Naive thymus-derived CD4-positive, alpha-beta T cell (primary cell): ENCODE measurements at regions of chr4 and their contacts with region 1.

Region 1: DNA sequence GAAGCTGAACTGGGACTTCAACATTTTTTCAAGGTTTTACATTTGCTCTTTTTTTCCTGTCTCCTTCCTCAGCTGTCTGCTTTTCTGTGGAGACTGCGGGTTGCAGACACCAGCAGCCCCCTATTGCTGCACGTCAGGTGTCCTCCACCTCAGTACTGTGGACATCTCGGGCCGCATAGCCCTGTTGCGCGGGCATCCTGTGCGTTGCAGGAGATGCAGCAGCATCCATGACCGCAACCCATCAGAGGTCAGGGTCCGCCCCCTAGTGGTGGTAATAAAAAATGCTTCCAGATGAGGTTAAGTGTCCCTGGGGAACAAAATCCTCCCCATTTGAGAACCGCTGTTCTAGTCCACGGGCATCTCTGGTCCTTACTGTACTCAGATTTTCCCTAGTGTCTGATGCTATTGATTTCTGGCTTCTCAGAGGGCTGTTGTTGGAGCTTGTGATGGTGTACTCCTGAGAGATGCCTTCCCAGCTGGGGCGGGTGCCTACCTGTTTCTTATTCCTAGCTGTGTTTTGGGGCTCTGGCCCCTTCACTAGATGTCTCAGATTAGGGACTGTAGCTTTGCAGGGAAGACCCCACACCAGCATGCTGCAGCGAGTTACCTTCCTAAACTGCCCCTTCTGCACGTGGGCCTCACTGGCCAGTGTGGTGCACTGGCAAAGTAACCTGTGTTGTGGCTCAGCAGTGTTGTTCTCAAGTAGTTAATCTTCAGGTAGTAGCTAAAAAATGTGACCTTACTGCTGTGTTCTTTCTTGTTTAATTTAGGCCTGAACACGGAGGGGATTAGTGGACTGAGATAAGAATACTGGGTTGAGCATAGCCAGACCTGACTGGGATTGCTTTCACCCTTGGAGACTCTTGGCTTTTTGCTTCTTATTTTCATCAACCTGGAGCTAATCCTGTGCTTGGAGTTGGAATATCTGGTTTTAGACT is 28.2 kb downstream of the NSD2 start:
- DNase-seq: peak; percentile 55 to 82 (median 76)
- ATAC-seq: peak; percentile 97
- H3K4me3 ChIP-seq: no peak overlapping the region
- H3K4me3 Mint-ChIP-seq: peak overlapping the region in 4 of 10 donors; percentile 18 to 64 (median 42)
- H3K27ac ChIP-seq: no peak overlapping the region
- H3K27ac Mint-ChIP-seq: peak overlapping the region in 4 of 9 donors; percentile 2 to 87 (median 17)
- H3K4me1 ChIP-seq: no peaks in the 10 kb centered on the region
- H3K4me1 Mint-ChIP-seq: peaks cover 7 to 66% (median 11%) of the 10 kb centered on the region in 7 donors
- H3K27me3 ChIP-seq: no peaks in the 10 kb centered on the region
- H3K27me3 Mint-ChIP-seq: no peaks in the 10 kb centered on the region

Region 2: GRCh38 chr4:1693129-1693896 is 206.1 kb before region 1 on chr4:
- CTCF ChIA-PET with region 1: interaction called, 8 read pairs
- POLR2A ChIA-PET with region 1: no interaction called
- intact Hi-C with region 1: loop called in 1 of 2 experiments (anchors 1 kb)
- DNase-seq: peak; percentile 65 to 83 (median 80)
- ATAC-seq: peak; percentile 97
- H3K4me3 ChIP-seq: no peak overlapping the region
- H3K4me3 Mint-ChIP-seq: no peak overlapping the region
- H3K27ac ChIP-seq: no peak overlapping the region
- H3K27ac Mint-ChIP-seq: peak overlapping the region in 8 of 9 donors; percentile 51 to 88 (median 72)
- H3K4me1 ChIP-seq: no peaks in the 10 kb centered on the region
- H3K4me1 Mint-ChIP-seq: peaks cover 0 to 5% (median 4%) of the 10 kb centered on the region in 7 donors
- H3K27me3 ChIP-seq: no peaks in the 10 kb centered on the region
- H3K27me3 Mint-ChIP-seq: no peaks in the 10 kb centered on the region

Region 3: DNA sequence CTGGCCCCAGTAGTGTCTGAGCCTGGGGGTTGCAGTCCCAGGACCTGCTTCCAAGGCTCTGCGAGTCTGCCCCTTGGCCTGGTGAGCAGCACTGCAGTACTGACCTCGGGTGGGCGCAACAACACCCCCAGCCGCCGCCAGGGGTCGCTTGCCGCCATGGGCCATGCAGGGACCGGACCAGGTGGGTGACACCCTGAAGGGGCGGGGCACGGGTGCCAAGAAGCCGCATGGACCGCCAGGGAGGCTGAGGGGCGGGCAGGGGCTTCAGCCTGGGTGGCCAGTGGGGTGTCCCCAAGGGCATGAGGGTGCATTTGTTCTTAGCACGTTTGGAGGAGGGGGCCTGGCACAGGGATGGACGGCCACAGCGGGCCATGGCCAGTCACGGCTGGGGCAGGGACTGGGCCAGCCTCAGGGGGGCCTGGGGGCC is 153.1 kb before region 1 on chr4:
- CTCF ChIA-PET with region 1: interaction called, 32 read pairs
- POLR2A ChIA-PET with region 1: interaction called, 3 read pairs
- intact Hi-C with region 1: loop called (anchors 1 kb)
- DNase-seq: peak; percentile 52 to 85 (median 60)
- ATAC-seq: peak; percentile 68
- H3K4me3 ChIP-seq: no peak overlapping the region
- H3K4me3 Mint-ChIP-seq: no peak overlapping the region
- H3K27ac ChIP-seq: no peak overlapping the region
- H3K27ac Mint-ChIP-seq: no peak overlapping the region
- H3K4me1 ChIP-seq: no peaks in the 10 kb centered on the region
- H3K4me1 Mint-ChIP-seq: no peaks in the 10 kb centered on the region
- H3K27me3 ChIP-seq: no peaks in the 10 kb centered on the region
- H3K27me3 Mint-ChIP-seq: no peaks in the 10 kb centered on the region

Region 4: GRCh38 chr4:1752284-1753041 is 147.0 kb before region 1 on chr4:
- CTCF ChIA-PET with region 1: interaction called, 32 read pairs
- POLR2A ChIA-PET with region 1: interaction called, 3 read pairs
- intact Hi-C with region 1: loop called in 1 of 2 experiments (anchors 1 kb)
- DNase-seq: peak in 2 of 9 donors; percentile 11 to 66
- ATAC-seq: no peak
- H3K4me3 ChIP-seq: no peak overlapping the region
- H3K4me3 Mint-ChIP-seq: peak overlapping the region in 2 of 10 donors; percentile 12 to 39
- H3K27ac ChIP-seq: no peak overlapping the region
- H3K27ac Mint-ChIP-seq: peak overlapping the region in 1 of 9 donors; percentile 74
- H3K4me1 ChIP-seq: peaks cover 0 to 10% of the 10 kb centered on the region in 2 donors
- H3K4me1 Mint-ChIP-seq: peaks cover 0 to 3% (median 0%) of the 10 kb centered on the region in 7 donors
- H3K27me3 ChIP-seq: no peaks in the 10 kb centered on the region
- H3K27me3 Mint-ChIP-seq: no peaks in the 10 kb centered on the region

Region 5: GRCh38 chr4:1809754-1810511 is 89.5 kb before region 1 on chr4:
- CTCF ChIA-PET with region 1: interaction called, 11 read pairs
- POLR2A ChIA-PET with region 1: no interaction called
- intact Hi-C with region 1: loop called (anchors 1 kb)
- DNase-seq: peak; percentile 30 to 79 (median 61)
- ATAC-seq: peak; percentile 74
- H3K4me3 ChIP-seq: no peak overlapping the region
- H3K4me3 Mint-ChIP-seq: no peak overlapping the region
- H3K27ac ChIP-seq: no peak overlapping the region
- H3K27ac Mint-ChIP-seq: no peak overlapping the region
- H3K4me1 ChIP-seq: no peaks in the 10 kb centered on the region
- H3K4me1 Mint-ChIP-seq: peaks cover 0 to 2% (median 0%) of the 10 kb centered on the region in 7 donors
- H3K27me3 ChIP-seq: no peaks in the 10 kb centered on the region
- H3K27me3 Mint-ChIP-seq: no peaks in the 10 kb centered on the region

Region 6: GRCh38 chr4:1856042-1856788 is 43.2 kb before region 1 on chr4 and contains the start of gene LETM1:
- CTCF ChIA-PET with region 1: interaction called, 4 read pairs
- POLR2A ChIA-PET with region 1: no interaction called
- intact Hi-C with region 1: loop called (anchors 1 kb)
- DNase-seq: peak; percentile 79 to 96 (median 88)
- ATAC-seq: peak; percentile 98
- H3K4me3 ChIP-seq: peak within 1 kb of the TSS; percentile 86
- H3K4me3 Mint-ChIP-seq: peak within 1 kb of the TSS; percentile 67 to 88 (median 83)
- H3K27ac ChIP-seq: peak within 1 kb of the TSS; percentile 70
- H3K27ac Mint-ChIP-seq: peak within 1 kb of the TSS in 8 of 9 donors; percentile 17 to 80 (median 48)
- H3K4me1 ChIP-seq: peaks cover 10 to 14% of the 10 kb centered on the region in 2 donors
- H3K4me1 Mint-ChIP-seq: peaks cover 31 to 45% (median 41%) of the 10 kb centered on the region in 7 donors
- H3K27me3 ChIP-seq: no peaks in the 10 kb centered on the region
- H3K27me3 Mint-ChIP-seq: no peaks in the 10 kb centered on the region
- total RNA-seq, gene LETM1: 29.5 to 56.4 (median 36.0) TPM

Region 7: DNA sequence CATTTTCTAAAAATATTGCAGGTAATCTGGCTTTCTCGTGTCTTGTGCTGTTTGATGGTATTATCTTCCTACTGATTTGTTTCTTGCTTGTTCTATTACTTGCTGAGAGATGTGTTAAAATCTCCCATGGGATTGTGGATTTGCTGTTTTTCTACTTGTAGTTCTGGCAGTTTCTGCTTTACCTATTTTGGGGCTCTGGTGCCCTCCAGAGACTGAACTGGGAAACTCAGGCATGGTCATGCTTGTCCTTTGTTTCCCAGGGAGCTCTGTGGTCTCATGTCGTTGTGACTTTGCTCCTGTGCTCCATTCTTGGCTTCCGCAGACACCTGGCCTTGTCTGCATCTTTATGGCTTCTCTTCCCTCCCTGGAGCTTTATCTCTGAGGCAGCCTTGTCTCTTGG is 11.2 kb after region 1 on chr4:
- CTCF ChIA-PET with region 1: interaction called, 16 read pairs
- POLR2A ChIA-PET with region 1: no interaction called
- intact Hi-C with region 1: no loop called
- DNase-seq: no peak
- ATAC-seq: no peak
- H3K4me3 ChIP-seq: no peak overlapping the region
- H3K4me3 Mint-ChIP-seq: no peak overlapping the region
- H3K27ac ChIP-seq: no peak overlapping the region
- H3K27ac Mint-ChIP-seq: peak overlapping the region in 5 of 9 donors; percentile 6 to 62 (median 12)
- H3K4me1 ChIP-seq: no peaks in the 10 kb centered on the region
- H3K4me1 Mint-ChIP-seq: peaks cover 3 to 48% (median 19%) of the 10 kb centered on the region in 7 donors
- H3K27me3 ChIP-seq: no peaks in the 10 kb centered on the region
- H3K27me3 Mint-ChIP-seq: no peaks in the 10 kb centered on the region